Endothelial cell of umbilical vein (primary cell): ENCODE measurements at regions of chr4 and their contacts with region 1.

Region 1: GRCh38 chr4:102620697-102621497 is 119.7 kb downstream of the NFKB1 start:
- DNase-seq: peak; percentile 67
- H3K4me3 ChIP-seq: no peak overlapping the region
- H3K27ac ChIP-seq: no peak overlapping the region
- H3K4me1 ChIP-seq: peaks cover 1% of the 10 kb centered on the region
- H3K27me3 ChIP-seq: no peaks in the 10 kb centered on the region
- CTCF ChIP-seq: peak; percentile 34 to 36
- POLR2A ChIP-seq: no peak

Region 2: GRCh38 chr4:102001873-102002272 is 619.0 kb before region 1 on chr4:
- CTCF ChIA-PET with region 1: no interaction called
- POLR2A ChIA-PET with region 1: no interaction called
- dilution Hi-C with region 1: no loop called
- intact Hi-C with region 1: no loop called
- DNase-seq: no peak
- H3K4me3 ChIP-seq: no peak overlapping the region
- H3K27ac ChIP-seq: no peak overlapping the region
- H3K4me1 ChIP-seq: no peaks in the 10 kb centered on the region
- H3K27me3 ChIP-seq: no peaks in the 10 kb centered on the region
- CTCF ChIP-seq: no peak
- POLR2A ChIP-seq: no peak

Region 3: GRCh38 chr4:102263011-102263787 is 357.7 kb before region 1 on chr4:
- CTCF ChIA-PET with region 1: no interaction called
- POLR2A ChIA-PET with region 1: no interaction called
- dilution Hi-C with region 1: no loop called
- intact Hi-C with region 1: no loop called
- DNase-seq: peak; percentile 64
- H3K4me3 ChIP-seq: no peak overlapping the region
- H3K27ac ChIP-seq: no peak overlapping the region
- H3K4me1 ChIP-seq: peaks cover 4% of the 10 kb centered on the region
- H3K27me3 ChIP-seq: no peaks in the 10 kb centered on the region
- CTCF ChIP-seq: peak; percentile 42 to 52
- POLR2A ChIP-seq: no peak

Region 4: DNA sequence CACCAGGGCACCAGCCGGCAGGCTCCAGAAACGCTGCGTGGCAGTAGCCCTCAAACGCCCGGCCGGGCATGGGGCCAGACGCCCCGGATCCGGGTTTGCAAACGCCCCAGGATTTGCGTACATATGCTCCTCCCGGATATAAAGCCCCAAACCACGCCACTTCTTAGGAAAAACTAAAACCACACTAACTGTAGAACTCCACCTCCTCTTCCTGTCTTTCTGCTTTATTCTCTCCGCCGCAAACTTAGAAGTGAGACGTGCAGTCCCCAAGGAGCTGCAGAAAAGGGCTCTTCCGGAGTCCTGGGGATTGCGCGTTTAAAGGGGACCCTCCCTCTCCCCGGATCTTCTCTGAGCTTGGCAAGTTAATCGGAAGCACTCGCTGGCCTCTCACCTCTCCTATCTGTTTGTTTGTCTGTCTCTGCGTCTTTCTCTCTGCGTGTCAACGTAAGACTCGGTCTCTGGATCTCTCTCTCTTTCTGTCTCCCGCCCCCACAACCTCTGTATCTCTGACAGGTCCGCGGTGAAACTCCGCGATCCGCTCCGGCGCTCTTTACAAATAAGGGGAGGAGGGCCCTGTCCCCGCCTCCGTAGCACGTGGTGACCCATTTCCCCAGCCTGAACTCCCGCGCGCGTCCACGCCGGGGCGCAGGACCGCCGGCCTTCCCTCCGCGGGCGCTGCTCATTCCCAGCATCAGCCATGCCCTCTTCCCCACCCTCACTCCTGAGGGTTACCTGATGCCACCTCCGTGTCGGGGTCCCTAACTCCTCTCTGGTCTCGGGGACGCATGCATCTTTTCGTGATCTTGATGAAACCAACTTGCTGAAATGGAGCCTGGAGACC is 275.7 kb before region 1 on chr4 and contains the start of gene SLC39A8:
- CTCF ChIA-PET with region 1: no interaction called
- POLR2A ChIA-PET with region 1: no interaction called
- dilution Hi-C with region 1: no loop called
- intact Hi-C with region 1: loop called (anchors 10 kb)
- DNase-seq: peak; percentile 79
- H3K4me3 ChIP-seq: peak within 1 kb of the TSS; percentile 39 to 90 (median 89)
- H3K27ac ChIP-seq: no peak within 1 kb of the TSS
- H3K4me1 ChIP-seq: peaks cover 19% of the 10 kb centered on the region
- H3K27me3 ChIP-seq: peaks cover 2 to 5% of the 10 kb centered on the region in 2 experiments
- CTCF ChIP-seq: peak; percentile 67 to 84
- POLR2A ChIP-seq: peak; percentile 42
- total RNA-seq, gene SLC39A8: 6.0 and 6.7 TPM in 2 replicates

Region 5: GRCh38 chr4:102449751-102450352 is 171.0 kb before region 1 on chr4:
- CTCF ChIA-PET with region 1: interaction called, 10 read pairs
- POLR2A ChIA-PET with region 1: no interaction called
- dilution Hi-C with region 1: no loop called
- intact Hi-C with region 1: loop called (anchors 1 kb)
- DNase-seq: peak; percentile 74
- H3K4me3 ChIP-seq: no peak overlapping the region
- H3K27ac ChIP-seq: no peak overlapping the region
- H3K4me1 ChIP-seq: no peaks in the 10 kb centered on the region
- H3K27me3 ChIP-seq: no peaks in the 10 kb centered on the region
- CTCF ChIP-seq: peak; percentile 40 to 58
- POLR2A ChIP-seq: no peak

Region 6: DNA sequence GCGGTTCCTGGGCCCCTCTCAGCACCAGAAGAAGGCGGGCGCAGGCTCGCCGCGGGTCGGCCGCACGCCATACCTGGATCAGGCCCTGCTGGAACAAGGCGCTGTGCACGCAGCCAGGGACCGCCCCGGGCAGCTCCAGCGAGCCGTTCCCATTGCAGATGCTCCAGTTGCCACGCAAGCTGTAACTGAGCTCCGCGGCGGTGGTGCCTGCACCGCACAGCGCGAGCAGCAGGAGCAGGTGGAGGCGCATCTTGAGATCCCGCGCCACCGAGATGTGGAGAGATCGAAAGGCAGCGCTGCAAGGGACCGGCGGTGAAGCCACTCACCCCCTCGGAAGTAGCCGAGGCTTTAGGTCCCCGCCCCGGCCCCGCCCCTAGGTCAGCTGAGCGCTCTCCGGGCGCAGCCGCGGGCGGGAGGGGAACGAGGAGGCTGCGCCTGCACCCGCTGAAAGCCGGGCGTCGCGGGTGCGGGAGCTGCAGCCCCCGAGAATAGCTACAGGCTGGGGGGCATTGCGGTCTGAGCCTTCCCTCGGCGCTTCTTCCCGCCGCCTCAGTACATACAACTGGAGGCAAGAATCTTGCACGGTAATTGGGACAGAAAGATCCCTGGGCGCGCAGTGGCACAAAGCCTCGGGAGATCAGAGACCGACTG is 139.9 kb after region 1 on chr4 and contains the start of gene MANBA:
- CTCF ChIA-PET with region 1: interaction called, 15 read pairs
- POLR2A ChIA-PET with region 1: no interaction called
- dilution Hi-C with region 1: no loop called
- intact Hi-C with region 1: loop called (anchors 2 kb)
- DNase-seq: peak; percentile 70
- H3K4me3 ChIP-seq: peak within 1 kb of the TSS; percentile 56 to 65 (median 59)
- H3K27ac ChIP-seq: no peak within 1 kb of the TSS
- H3K4me1 ChIP-seq: peaks cover 17% of the 10 kb centered on the region
- H3K27me3 ChIP-seq: peaks cover 0 to 2% of the 10 kb centered on the region in 2 experiments
- CTCF ChIP-seq: no peak
- POLR2A ChIP-seq: peak; percentile 51
- total RNA-seq, gene MANBA: 7.7 and 8.3 TPM in 2 replicates

Region 7: GRCh38 chr4:103008875-103009729 is 388.2 kb after region 1 on chr4:
- CTCF ChIA-PET with region 1: interaction called, 116 read pairs
- POLR2A ChIA-PET with region 1: no interaction called
- dilution Hi-C with region 1: no loop called
- intact Hi-C with region 1: loop called (anchors 1 kb)
- DNase-seq: peak; percentile 76
- H3K4me3 ChIP-seq: no peak overlapping the region
- H3K27ac ChIP-seq: no peak overlapping the region
- H3K4me1 ChIP-seq: no peaks in the 10 kb centered on the region
- H3K27me3 ChIP-seq: peaks cover 2% of the 10 kb centered on the region in 2 experiments
- CTCF ChIP-seq: peak; percentile 49 to 51
- POLR2A ChIP-seq: no peak

Region 8: GRCh38 chr4:103091601-103092223 is 470.8 kb after region 1 on chr4:
- CTCF ChIA-PET with region 1: interaction called, 40 read pairs
- POLR2A ChIA-PET with region 1: no interaction called
- dilution Hi-C with region 1: no loop called
- intact Hi-C with region 1: loop called (anchors 2 kb)
- DNase-seq: peak; percentile 66
- H3K4me3 ChIP-seq: no peak overlapping the region
- H3K27ac ChIP-seq: no peak overlapping the region
- H3K4me1 ChIP-seq: no peaks in the 10 kb centered on the region
- H3K27me3 ChIP-seq: no peaks in the 10 kb centered on the region
- CTCF ChIP-seq: peak; percentile 49 to 56
- POLR2A ChIP-seq: no peak